Panc1 (cell line): ENCODE measurements at regions of chr6 and their contacts with region 1.

Region 1: GRCh38 chr6:72636215-72636614 is 14.4 kb downstream of the KCNQ5 start:
- DNase-seq: no peak
- ATAC-seq: no peak
- H3K4me3 ChIP-seq: no peak overlapping the region
- H3K27ac ChIP-seq: no peak overlapping the region
- H3K4me1 ChIP-seq: no peaks in the 10 kb centered on the region
- H3K27me3 ChIP-seq: no peaks in the 10 kb centered on the region
- CTCF ChIP-seq: no peak

Region 2: DNA sequence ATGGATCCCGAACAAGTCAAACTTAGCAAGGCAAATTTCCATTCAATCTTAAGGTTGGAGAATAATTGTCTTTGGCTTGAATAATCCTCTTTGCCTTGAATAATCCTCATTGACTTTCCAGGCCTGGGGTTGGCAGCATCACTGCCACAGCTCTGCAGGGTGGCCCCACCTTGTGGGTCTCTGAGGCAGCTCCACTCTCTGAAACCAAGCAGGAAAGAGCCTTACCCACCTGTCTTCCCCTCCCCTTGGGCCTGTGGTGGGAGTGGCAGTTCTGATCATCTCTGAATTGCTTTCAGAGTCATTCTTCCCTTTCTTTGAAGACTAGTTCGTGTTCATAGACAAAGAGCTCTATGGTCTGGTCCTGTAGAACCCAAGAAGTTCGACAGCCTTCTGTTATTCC is 33.1 kb after region 1 on chr6:
- CTCF ChIA-PET with region 1: interaction called, 3 read pairs
- POLR2A ChIA-PET with region 1: interaction called, 17 read pairs
- in situ Hi-C with region 1: no loop called
- intact Hi-C with region 1: no loop called
- DNase-seq: no peak
- ATAC-seq: no peak
- H3K4me3 ChIP-seq: no peak overlapping the region
- H3K27ac ChIP-seq: no peak overlapping the region
- H3K4me1 ChIP-seq: no peaks in the 10 kb centered on the region
- H3K27me3 ChIP-seq: no peaks in the 10 kb centered on the region
- CTCF ChIP-seq: no peak

Region 3: DNA sequence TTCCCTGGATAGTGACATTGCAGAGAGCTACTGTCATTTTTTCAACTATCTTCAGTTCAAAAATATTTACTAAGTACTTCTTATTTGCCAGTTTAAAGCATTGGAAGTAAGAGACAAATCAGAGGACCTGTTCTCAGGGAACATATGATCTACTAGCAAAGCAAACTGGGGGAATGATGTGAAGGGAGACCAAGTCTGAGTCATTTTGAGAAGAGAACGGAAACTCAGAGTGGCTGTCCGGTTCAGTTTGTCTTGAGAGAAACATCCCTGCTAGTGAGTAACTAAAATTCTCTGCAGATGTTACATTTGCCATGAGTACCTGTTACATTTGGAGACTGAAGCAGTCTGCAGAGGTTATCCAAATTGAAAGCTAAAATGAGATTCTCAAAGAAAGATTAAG is 103.9 kb after region 1 on chr6:
- CTCF ChIA-PET with region 1: no interaction called
- POLR2A ChIA-PET with region 1: no interaction called
- in situ Hi-C with region 1: no loop called
- intact Hi-C with region 1: no loop called
- DNase-seq: no peak
- ATAC-seq: no peak
- H3K4me3 ChIP-seq: no peak overlapping the region
- H3K27ac ChIP-seq: no peak overlapping the region
- H3K4me1 ChIP-seq: no peaks in the 10 kb centered on the region
- H3K27me3 ChIP-seq: no peaks in the 10 kb centered on the region
- CTCF ChIP-seq: no peak